Sciatic nerve (tissue), 2 donors: ENCODE measurements at regions of chr15 and their contacts with region 1.

Region 1: DNA sequence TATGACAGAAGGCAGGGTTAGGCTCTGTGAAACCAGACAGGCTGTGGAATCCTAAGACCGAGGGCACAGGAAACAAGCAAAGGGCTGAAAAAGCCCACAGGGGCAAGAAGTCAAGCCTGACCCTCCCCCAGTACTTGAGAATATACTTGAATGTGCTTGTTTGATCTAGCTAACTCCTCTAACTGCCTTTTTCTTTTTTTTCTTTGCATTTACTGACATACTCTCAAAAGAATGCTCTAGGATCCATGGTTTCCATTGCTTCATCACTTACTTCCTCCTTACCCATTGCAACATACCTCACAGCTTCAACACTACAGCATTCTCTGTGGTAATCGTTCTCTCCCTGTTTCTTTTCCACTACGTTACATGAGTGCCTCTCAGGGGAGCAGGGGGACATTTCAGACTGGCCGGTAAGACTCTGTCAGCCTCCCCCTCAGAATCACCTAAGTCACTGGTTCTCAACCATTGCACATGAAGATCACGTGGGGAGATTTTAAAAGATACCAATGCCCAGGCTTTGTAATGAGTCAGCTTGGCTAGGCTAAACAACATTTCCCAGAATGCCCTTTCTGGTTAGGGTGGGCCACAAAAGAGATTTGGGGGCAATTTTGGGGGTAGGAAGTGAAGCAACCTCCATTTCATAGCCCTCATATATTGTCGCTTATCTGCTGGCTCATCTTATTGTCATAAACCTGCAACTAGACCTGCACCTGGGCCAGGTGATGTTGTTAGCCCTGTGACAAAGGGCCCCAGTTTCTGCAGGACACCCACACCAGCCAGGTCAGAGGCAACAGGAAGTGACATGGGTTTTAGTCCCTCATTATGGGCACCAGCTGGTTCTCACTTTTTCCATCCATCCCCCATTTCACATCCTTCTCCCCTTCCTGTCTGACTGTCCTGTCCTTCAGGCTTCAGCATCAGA is 24.6 kb upstream of the RSL24D1 start:
- DNase-seq: no peak
- ATAC-seq: peak; percentile 80

Region 2: GRCh38 chr15:55094136-55094535 is 127.2 kb before region 1 on chr15:
- intact Hi-C with region 1: no loop called
- DNase-seq: no peak
- ATAC-seq: no peak

Region 3: GRCh38 chr15:55289721-55290527 is 68.6 kb after region 1 on chr15 and contains the start of gene RAB27A:
- intact Hi-C with region 1: loop called (anchors 5 kb)
- DNase-seq: peak; percentile 75
- ATAC-seq: peak; percentile 92
- total RNA-seq, gene RAB27A: 27.6 TPM

Region 4: DNA sequence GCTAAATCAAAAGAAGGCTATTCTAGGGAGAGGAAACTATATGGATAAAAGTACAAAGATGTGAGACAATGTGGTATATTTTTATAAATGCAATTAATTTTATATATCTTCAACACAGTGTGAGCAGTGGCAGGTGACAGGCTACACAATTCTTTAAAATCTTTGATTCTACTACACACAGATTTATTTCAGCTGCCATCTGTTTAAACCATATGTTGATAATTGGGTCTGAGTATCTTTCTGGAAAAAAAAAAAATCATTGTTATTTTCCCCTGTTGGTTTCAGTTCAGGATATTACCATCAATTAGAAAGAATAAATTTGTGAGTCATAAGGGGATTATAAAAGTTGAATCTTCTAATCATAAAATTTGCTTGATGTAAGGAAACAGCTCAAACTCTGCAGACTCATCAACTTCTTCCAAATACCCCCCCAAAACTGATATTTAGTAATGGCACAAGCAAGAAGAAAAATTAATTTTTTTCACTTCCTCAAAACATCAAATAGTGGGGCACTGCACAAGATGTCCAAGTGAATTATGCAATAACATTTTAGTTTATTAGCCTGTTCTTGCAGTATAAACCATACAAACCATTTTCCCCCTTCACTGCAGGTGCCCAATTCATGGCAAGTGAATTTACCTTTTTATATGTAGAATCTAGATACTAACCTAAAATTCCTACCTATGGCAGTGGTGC is 199.0 kb after region 1 on chr15:
- intact Hi-C with region 1: loop called (anchors 10 kb)
- DNase-seq: no peak
- ATAC-seq: no peak